ENCODE measurements at regions of chr1 and their contacts with region 1.

Region 1: DNA sequence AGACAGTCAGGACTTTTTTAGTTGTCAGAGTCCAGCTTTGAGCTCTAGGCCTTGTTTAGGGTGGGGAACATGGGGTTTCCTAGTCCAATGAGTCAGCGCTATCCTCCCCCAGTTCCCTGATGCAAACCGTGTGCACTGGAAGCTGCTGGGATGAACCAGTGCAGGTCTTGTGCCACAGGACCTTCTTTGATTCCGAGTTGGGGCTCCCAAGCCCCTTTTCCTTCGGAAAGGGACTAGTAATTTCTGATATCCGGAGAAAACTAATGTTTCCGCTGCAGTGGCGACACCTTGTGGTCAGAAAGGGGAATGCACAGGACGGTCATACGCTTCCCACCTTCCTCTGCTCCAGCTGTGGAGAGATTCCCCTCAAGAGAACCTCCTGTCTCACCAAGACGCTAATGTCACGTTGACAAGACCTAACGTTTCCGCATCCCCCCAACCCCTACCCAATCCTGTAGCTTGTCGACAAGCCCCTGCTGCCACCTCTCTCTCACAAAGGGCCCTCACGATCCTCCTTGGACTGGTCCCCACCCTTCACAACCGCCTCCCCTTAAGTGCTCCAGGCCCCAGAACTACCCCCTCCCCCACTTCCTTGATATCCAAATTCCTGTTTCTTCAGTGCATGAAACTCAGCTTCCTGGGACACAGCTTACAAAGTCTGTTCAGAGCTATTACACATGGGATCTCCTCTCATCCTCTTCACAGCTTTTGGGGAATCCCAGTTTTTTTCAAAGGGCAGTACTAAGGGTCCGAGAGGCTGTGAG is 30.9 kb downstream of the GPA33 start:
- DNase-seq: peak; percentile 63
- ATAC-seq: peak; percentile 74
- H3K4me3 Mint-ChIP-seq: peak overlapping the region; percentile 36
- H3K27ac Mint-ChIP-seq: peak overlapping the region; percentile 54
- H3K4me1 Mint-ChIP-seq: peaks cover 4% of the 10 kb centered on the region
- H3K27me3 Mint-ChIP-seq: peaks cover 3% of the 10 kb centered on the region
- CTCF ChIP-seq: peak; percentile 98

Region 2: DNA sequence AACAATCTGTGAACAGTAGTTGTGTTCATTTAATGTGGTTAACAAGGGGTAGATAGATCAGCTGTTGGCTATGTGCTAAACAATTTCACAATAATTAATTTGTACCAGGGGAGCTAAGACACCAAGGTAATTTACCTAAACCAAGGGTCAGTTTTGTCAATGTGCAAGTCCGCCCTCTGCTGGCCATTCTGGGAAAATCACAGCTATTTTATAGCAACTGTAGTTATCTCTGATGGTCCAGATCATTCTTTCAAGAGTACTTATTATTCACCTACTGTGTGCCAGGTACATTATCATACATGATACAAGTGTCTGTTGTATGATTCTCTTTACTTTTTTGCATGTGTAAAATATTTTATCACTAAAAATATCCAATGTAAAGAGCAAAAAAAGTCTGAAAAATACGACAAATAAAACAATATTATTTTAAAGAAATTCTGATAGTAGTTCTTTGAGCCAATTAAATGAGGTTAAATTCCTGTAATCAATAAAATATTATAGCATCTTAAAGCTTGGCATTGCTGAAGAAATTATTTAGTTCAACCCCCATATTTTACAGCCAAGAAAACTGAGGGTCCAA is 580.1 kb before region 1 on chr1:
- CTCF ChIA-PET with region 1: interaction called, 4 read pairs
- POLR2A ChIA-PET with region 1: no interaction called
- intact Hi-C with region 1: loop called (anchors 2 kb)
- DNase-seq: peak; percentile 18
- ATAC-seq: no peak
- H3K4me3 Mint-ChIP-seq: no peak overlapping the region
- H3K27ac Mint-ChIP-seq: no peak overlapping the region
- H3K4me1 Mint-ChIP-seq: peaks cover 4% of the 10 kb centered on the region
- H3K27me3 Mint-ChIP-seq: no peaks in the 10 kb centered on the region
- CTCF ChIP-seq: peak; percentile 50

Region 3: GRCh38 chr1:166875734-166876539 is 183.3 kb before region 1 on chr1 and contains the start of gene TADA1:
- CTCF ChIA-PET with region 1: interaction called, 19 read pairs
- POLR2A ChIA-PET with region 1: no interaction called
- intact Hi-C with region 1: no loop called
- DNase-seq: peak; percentile 94
- ATAC-seq: peak; percentile 93
- H3K4me3 Mint-ChIP-seq: peak within 1 kb of the TSS; percentile 96
- H3K27ac Mint-ChIP-seq: peak within 1 kb of the TSS; percentile 98
- H3K4me1 Mint-ChIP-seq: peaks cover 30% of the 10 kb centered on the region
- H3K27me3 Mint-ChIP-seq: no peaks in the 10 kb centered on the region
- CTCF ChIP-seq: no peak
- total RNA-seq, gene TADA1: 13.6 and 15.3 TPM in 2 replicates

Region 4: GRCh38 chr1:166884040-166884642 is 175.1 kb before region 1 on chr1:
- CTCF ChIA-PET with region 1: interaction called, 31 read pairs
- POLR2A ChIA-PET with region 1: no interaction called
- intact Hi-C with region 1: loop called (anchors 1 kb)
- DNase-seq: peak; percentile 19
- ATAC-seq: peak; percentile 69
- H3K4me3 Mint-ChIP-seq: no peak overlapping the region
- H3K27ac Mint-ChIP-seq: no peak overlapping the region
- H3K4me1 Mint-ChIP-seq: peaks cover 8% of the 10 kb centered on the region
- H3K27me3 Mint-ChIP-seq: peaks cover 22% of the 10 kb centered on the region
- CTCF ChIP-seq: no peak

Region 5: DNA sequence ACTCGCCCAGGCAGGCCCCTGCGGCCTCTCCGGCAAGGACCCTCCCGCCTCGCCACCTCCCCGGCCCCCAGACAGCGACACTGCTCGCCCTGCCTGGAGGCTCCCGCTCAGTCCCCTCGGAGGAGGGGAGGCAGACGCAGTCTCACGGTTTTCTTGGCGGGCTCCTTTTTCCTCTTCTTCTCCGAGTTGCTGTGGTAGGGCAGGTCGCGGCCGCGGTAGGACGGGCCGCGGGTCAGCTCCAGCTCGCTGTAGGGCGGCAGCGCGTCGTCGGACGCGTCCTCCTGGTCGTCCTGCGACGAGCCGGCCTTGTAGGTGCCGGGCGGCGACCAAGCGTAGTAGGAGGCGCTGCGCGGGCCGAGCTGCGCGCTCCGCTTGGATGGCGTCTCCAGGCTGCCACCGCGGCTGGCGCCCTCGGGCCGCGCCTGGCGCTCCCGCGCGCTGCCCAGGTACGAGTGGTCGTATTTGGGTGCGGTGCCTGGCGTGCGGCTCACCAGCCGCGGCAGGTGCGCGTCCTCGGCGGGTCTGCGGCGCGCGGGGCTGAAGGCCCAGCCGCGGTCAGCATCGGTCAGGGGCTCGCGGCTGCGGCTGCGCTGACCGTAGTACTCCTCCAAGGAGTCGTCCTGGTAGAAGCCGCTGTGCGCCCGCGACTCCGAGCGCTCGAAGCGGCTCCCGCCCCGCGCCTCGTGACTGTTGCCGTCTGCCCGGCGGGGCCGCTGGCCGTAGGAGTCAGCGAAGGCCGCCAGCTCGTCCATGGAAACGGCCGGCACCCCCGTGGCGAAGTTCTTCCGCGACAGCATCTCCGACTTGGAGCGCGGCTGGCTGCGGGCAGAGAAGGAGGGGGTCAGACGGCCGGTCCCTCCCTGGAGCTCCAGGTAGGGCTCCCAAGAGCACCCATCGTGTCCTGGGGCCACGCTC is 138.4 kb before region 1 on chr1:
- CTCF ChIA-PET with region 1: interaction called, 700 read pairs
- POLR2A ChIA-PET with region 1: no interaction called
- intact Hi-C with region 1: no loop called
- DNase-seq: peak; percentile 37
- ATAC-seq: peak; percentile 23
- H3K4me3 Mint-ChIP-seq: peak overlapping the region; percentile 82
- H3K27ac Mint-ChIP-seq: no peak overlapping the region
- H3K4me1 Mint-ChIP-seq: peaks cover 34% of the 10 kb centered on the region
- H3K27me3 Mint-ChIP-seq: peaks cover 26% of the 10 kb centered on the region
- CTCF ChIP-seq: no peak

Region 6: DNA sequence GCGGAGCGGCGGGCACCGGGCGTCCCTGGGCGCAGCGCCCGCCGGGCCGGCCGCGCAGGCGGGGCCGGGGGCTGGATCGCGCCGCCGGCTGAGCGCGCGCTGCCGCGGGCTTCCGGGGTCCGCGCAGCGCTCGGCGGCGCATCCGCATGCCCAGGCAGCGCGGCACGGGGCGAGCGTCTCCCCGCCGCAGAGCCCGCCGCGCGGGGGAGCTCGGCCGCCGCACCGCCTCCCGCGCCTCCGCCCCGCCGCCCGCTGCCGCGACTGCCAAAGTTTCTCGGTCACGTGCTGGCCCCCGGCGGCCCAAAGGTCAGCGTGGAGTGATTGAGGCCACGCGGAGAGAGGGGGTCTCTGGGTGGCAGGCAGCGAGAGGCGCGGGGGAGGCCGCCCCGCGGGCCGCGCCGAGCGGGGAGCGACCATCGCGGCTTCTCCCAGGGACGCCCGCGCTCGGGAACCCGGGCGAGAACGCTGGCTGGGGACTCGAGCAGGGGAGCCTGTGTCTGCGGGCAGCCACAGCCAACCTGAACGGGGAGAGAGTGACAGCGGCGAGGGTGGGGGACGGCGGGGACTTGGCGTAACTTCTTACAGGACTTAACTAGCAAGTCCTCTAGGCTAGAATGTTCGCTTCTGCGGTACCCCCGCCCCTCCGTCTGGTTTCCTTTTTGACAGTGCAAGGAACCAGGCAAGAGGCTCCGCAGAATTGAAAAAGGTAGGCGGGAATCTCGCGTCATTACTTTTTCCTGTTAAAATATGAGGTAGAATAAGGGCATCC is 83.7 kb before region 1 on chr1 and contains the start of gene ILDR2:
- CTCF ChIA-PET with region 1: interaction called, 10 read pairs
- POLR2A ChIA-PET with region 1: no interaction called
- intact Hi-C with region 1: loop called (anchors 5 kb)
- DNase-seq: peak; percentile 51
- ATAC-seq: peak; percentile 88
- H3K4me3 Mint-ChIP-seq: peak within 1 kb of the TSS; percentile 77
- H3K27ac Mint-ChIP-seq: peak within 1 kb of the TSS; percentile 13
- H3K4me1 Mint-ChIP-seq: peaks cover 15% of the 10 kb centered on the region
- H3K27me3 Mint-ChIP-seq: peaks cover 37% of the 10 kb centered on the region
- CTCF ChIP-seq: no peak
- total RNA-seq, gene ILDR2: 1.00 and 1.2 TPM in 2 replicates

Region 7: GRCh38 chr1:166988976-166989567 is 70.2 kb before region 1 on chr1 and contains the start of gene MAEL:
- CTCF ChIA-PET with region 1: no interaction called
- POLR2A ChIA-PET with region 1: no interaction called
- intact Hi-C with region 1: no loop called
- DNase-seq: no peak
- ATAC-seq: no peak
- H3K4me3 Mint-ChIP-seq: no peak within 1 kb of the TSS
- H3K27ac Mint-ChIP-seq: no peak within 1 kb of the TSS
- H3K4me1 Mint-ChIP-seq: no peaks in the 10 kb centered on the region
- H3K27me3 Mint-ChIP-seq: peaks cover 24% of the 10 kb centered on the region
- CTCF ChIP-seq: no peak
- total RNA-seq, gene MAEL: not detected in 2 replicates

Region 8: DNA sequence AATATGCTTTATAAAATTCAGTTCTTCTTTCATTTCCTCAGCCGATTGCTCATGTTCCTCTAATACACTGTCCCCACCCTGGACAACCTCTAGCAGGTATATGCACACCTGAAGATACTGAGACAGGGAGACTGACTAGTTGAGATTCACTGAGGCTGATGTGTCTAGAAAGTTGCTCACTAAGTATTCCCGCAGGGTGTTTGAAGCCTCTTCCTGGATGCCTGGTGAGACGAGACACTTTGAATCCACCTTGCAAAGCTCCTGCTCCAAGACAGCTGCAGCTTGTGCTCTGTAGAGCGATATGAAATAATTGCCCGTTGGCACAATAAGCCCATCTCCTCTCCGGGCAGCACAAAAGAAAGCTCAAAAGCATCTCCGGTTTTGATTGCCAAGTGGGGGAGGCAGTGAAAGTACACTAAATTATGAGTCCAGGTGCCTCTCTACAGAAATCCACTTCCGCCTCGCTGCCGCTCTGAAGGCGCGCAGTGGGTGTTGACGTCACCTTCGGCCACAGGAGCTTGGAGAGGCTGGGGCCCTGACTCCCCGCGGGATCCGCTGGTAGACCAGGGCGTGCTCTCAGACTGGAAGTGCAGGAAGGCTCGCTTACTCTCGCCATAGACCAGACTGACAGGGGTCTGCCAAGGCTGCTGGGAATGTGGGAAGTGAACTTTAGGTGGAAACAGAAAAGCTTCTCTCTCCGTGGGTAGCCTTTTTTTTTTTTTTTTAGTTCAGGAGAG is 15.3 kb before region 1 on chr1:
- CTCF ChIA-PET with region 1: interaction called, 11 read pairs
- POLR2A ChIA-PET with region 1: no interaction called
- intact Hi-C with region 1: no loop called
- DNase-seq: peak; percentile 44
- ATAC-seq: peak; percentile 94
- H3K4me3 Mint-ChIP-seq: peak overlapping the region; percentile 83
- H3K27ac Mint-ChIP-seq: peak overlapping the region; percentile 32
- H3K4me1 Mint-ChIP-seq: peaks cover 16% of the 10 kb centered on the region
- H3K27me3 Mint-ChIP-seq: peaks cover 14% of the 10 kb centered on the region
- CTCF ChIP-seq: no peak